Activated CD4-positive, alpha-beta T cell treated with anti-CD3 and anti-CD28 coated beads for 36 hours (primary cell): ENCODE measurements at regions of chr1 and their contacts with region 1.

Region 1: DNA sequence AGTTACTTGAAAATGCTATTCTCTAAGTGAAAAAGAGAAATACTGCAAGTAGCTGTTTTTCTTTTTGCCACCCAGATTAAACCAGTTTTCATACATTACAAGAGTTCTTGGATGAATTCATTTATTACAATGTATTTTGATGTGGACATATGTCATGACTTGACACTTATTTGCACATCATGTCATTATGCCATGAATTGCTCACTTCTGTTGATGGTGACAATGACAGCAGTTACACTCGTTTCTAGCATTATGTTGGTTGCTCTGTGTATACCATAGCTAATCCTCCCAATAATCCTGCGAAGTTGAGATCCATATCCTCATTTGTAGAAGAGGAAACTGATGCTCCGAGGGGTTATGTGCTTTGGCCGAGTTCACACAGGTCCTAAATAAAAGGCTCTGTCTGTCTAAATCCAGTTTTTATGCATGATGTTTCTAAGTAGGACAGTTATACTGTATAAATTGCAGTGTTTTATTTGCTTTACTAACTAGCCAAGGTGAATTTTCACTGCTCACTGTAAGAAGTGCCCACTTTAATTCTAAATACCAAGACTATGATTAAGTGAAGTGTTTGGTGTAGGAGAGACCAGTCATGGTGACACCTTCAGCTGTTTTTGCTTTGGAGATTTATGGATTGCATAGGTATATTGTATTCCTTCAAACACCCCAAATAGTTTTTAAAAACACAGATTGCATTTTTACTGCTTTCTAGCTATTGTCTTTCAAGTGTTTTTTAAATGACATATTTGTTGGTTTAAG is 56.7 kb downstream of the PRDM2 start:
- DNase-seq: no peak
- ATAC-seq: peak; percentile 55
- H3K4me3 Mint-ChIP-seq: no peak overlapping the region
- H3K27ac Mint-ChIP-seq: peak overlapping the region; percentile 56
- H3K4me1 Mint-ChIP-seq: peaks cover 84% of the 10 kb centered on the region
- H3K27me3 Mint-ChIP-seq: no peaks in the 10 kb centered on the region

Region 2: GRCh38 chr1:13774136-13774535 is 17.4 kb after region 1 on chr1:
- CTCF ChIA-PET with region 1: no interaction called
- POLR2A ChIA-PET with region 1: no interaction called
- intact Hi-C with region 1: no loop called
- DNase-seq: no peak
- ATAC-seq: no peak
- H3K4me3 Mint-ChIP-seq: no peak overlapping the region
- H3K27ac Mint-ChIP-seq: no peak overlapping the region
- H3K4me1 Mint-ChIP-seq: peaks cover 15% of the 10 kb centered on the region
- H3K27me3 Mint-ChIP-seq: no peaks in the 10 kb centered on the region

Region 3: GRCh38 chr1:13794231-13795187 is 37.8 kb after region 1 on chr1:
- CTCF ChIA-PET with region 1: interaction called, 5 read pairs
- POLR2A ChIA-PET with region 1: interaction called, 7 read pairs
- intact Hi-C with region 1: loop called in 1 of 2 experiments (anchors 2 kb)
- DNase-seq: peak; percentile 40
- ATAC-seq: peak; percentile 79
- H3K4me3 Mint-ChIP-seq: no peak overlapping the region
- H3K27ac Mint-ChIP-seq: peak overlapping the region; percentile 86
- H3K4me1 Mint-ChIP-seq: peaks cover 60% of the 10 kb centered on the region
- H3K27me3 Mint-ChIP-seq: no peaks in the 10 kb centered on the region

Region 4: DNA sequence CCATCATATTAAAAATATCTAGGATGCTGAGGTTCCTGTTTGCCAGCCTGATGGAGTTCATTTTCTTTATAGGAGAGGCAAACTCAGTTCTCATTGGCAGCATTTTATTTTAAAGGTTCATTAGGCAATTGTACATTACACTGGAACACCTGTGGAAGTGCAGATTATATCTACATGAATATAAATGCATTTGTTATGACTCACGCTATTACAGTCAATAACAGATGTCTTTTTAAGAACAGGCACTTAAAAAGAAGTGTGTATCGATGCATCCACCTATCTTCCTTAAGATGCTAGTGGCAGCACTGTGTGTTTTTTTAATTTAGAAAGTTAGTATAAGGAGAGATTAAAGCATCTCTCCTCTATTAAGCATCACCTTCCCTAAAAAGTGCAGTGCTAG is 219.7 kb after region 1 on chr1:
- CTCF ChIA-PET with region 1: no interaction called
- POLR2A ChIA-PET with region 1: no interaction called
- intact Hi-C with region 1: no loop called
- DNase-seq: no peak
- ATAC-seq: no peak
- H3K4me3 Mint-ChIP-seq: no peak overlapping the region
- H3K27ac Mint-ChIP-seq: no peak overlapping the region
- H3K4me1 Mint-ChIP-seq: no peaks in the 10 kb centered on the region
- H3K27me3 Mint-ChIP-seq: peaks cover 14% of the 10 kb centered on the region